ENCODE measurements at regions of chr6 and their contacts with region 1.

Region 1: DNA sequence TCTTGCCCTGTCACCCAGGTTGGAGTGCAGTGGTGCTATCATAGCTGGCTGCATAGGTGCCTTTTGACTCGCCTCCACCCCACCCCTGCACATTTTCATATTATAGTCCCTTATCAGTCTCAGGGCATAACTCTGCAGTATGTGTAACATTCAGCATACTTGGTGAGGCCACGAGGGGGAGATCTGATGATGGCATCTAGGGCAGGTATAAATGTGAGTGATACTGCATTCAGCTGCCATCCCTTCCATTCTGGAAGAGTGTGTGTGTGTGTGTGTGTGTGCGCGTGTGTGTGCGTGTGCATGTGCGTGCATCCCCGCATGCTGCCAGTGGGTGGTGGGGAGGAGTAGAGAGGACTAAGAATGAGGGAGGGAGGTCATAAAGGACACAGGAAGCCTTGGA is 81.4 kb downstream of the JARID2 start:
- DNase-seq: peak in 6 of 9 experiments; percentile 18 to 70 (median 48)
- ATAC-seq: peak; percentile 77
- H3K4me3 ChIP-seq: no peak overlapping the region
- H3K4me3 Mint-ChIP-seq: no peak overlapping the region
- H3K27ac ChIP-seq: no peak overlapping the region
- H3K27ac Mint-ChIP-seq: no peak overlapping the region
- H3K4me1 ChIP-seq: peaks cover 66% of the 10 kb centered on the region
- H3K4me1 Mint-ChIP-seq: peaks cover 85% of the 10 kb centered on the region
- H3K27me3 ChIP-seq: no peaks in the 10 kb centered on the region
- H3K27me3 Mint-ChIP-seq: no peaks in the 10 kb centered on the region
- CTCF ChIP-seq: peak; percentile 41

Region 2: GRCh38 chr6:15254070-15254841 is 73.0 kb before region 1 on chr6:
- CTCF ChIA-PET with region 1: no interaction called
- POLR2A ChIA-PET with region 1: interaction called, 3 read pairs
- intact Hi-C with region 1: loop called (anchors 2 kb)
- DNase-seq: peak in 1 of 9 experiments; percentile 39
- ATAC-seq: no peak
- H3K4me3 ChIP-seq: no peak overlapping the region
- H3K4me3 Mint-ChIP-seq: no peak overlapping the region
- H3K27ac ChIP-seq: peak overlapping the region in 1 of 2 experiments; percentile 20
- H3K27ac Mint-ChIP-seq: peak overlapping the region; percentile 71
- H3K4me1 ChIP-seq: peaks cover 72% of the 10 kb centered on the region
- H3K4me1 Mint-ChIP-seq: peaks cover 94% of the 10 kb centered on the region
- H3K27me3 ChIP-seq: no peaks in the 10 kb centered on the region
- H3K27me3 Mint-ChIP-seq: no peaks in the 10 kb centered on the region
- CTCF ChIP-seq: no peak

Region 3: DNA sequence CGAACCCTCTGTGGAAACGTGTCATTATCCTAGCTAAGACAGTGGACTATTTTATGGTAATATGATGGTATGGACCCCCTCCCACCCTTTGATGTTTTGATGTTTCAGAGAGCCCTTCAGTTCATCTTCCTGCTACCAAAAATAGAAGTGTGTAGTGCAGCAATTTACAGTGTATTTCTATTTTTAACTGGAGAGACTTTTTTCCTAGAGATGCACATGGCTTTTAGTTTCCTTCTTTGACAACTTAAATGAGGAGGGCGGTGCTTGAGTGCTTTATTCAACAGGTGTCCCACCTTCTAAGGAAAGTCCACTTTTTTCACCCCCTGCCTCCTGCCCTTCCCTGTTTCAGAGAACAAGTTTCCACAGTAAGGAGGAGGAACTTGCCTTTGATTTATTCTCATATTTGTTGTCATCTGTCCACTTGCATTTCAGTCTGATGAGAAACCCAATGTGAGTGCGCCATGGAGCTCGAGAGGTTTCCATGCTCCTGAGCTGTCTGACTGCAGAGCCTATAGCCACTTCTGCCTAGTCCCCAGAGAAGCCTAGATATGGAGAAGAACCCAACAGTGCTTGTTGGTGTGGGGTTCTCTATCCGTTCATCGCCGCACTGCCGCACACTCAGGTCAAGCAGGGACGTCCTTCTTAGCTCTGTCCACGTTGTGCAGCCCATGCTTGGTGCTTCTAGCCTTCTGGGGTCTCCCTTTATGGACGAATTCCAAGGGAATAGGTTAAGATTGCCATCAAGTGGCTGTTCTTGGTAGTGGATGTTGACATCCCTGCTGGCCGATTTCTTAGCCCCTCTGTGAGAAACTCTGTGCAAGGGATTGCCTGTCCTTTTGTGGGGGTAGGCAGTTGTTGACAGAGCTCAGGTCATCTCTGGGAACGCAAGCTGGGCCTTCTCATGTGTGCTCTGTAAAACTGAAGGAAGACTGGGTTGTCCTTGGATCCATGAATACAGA is 62.8 kb after region 1 on chr6:
- CTCF ChIA-PET with region 1: interaction called, 3 read pairs
- POLR2A ChIA-PET with region 1: no interaction called
- intact Hi-C with region 1: loop called (anchors 5 to 10 kb)
- DNase-seq: peak in 4 of 9 experiments; percentile 25 to 61 (median 38)
- ATAC-seq: peak; percentile 63
- H3K4me3 ChIP-seq: no peak overlapping the region
- H3K4me3 Mint-ChIP-seq: peak overlapping the region; percentile 3
- H3K27ac ChIP-seq: no peak overlapping the region
- H3K27ac Mint-ChIP-seq: no peak overlapping the region
- H3K4me1 ChIP-seq: peaks cover 27% of the 10 kb centered on the region
- H3K4me1 Mint-ChIP-seq: peaks cover 67% of the 10 kb centered on the region
- H3K27me3 ChIP-seq: no peaks in the 10 kb centered on the region
- H3K27me3 Mint-ChIP-seq: no peaks in the 10 kb centered on the region
- CTCF ChIP-seq: peak; percentile 65

Region 4: GRCh38 chr6:15441215-15441868 is 114.1 kb after region 1 on chr6:
- CTCF ChIA-PET with region 1: interaction called, 3 read pairs
- POLR2A ChIA-PET with region 1: no interaction called
- intact Hi-C with region 1: loop called (anchors 1 to 2 kb)
- DNase-seq: peak in 4 of 9 experiments; percentile 31 to 71 (median 46)
- ATAC-seq: peak; percentile 65
- H3K4me3 ChIP-seq: no peak overlapping the region
- H3K4me3 Mint-ChIP-seq: no peak overlapping the region
- H3K27ac ChIP-seq: no peak overlapping the region
- H3K27ac Mint-ChIP-seq: no peak overlapping the region
- H3K4me1 ChIP-seq: peaks cover 33% of the 10 kb centered on the region
- H3K4me1 Mint-ChIP-seq: peaks cover 79% of the 10 kb centered on the region
- H3K27me3 ChIP-seq: no peaks in the 10 kb centered on the region
- H3K27me3 Mint-ChIP-seq: no peaks in the 10 kb centered on the region
- CTCF ChIP-seq: peak; percentile 76

Region 5: GRCh38 chr6:15491255-15491985 is 164.1 kb after region 1 on chr6:
- CTCF ChIA-PET with region 1: no interaction called
- POLR2A ChIA-PET with region 1: no interaction called
- intact Hi-C with region 1: loop called in 1 of 2 experiments (anchors 5 kb)
- DNase-seq: peak; percentile 49 to 80 (median 68)
- ATAC-seq: peak; percentile 89
- H3K4me3 ChIP-seq: no peak overlapping the region
- H3K4me3 Mint-ChIP-seq: no peak overlapping the region
- H3K27ac ChIP-seq: no peak overlapping the region
- H3K27ac Mint-ChIP-seq: peak overlapping the region; percentile 2
- H3K4me1 ChIP-seq: peaks cover 12% of the 10 kb centered on the region
- H3K4me1 Mint-ChIP-seq: peaks cover 40% of the 10 kb centered on the region
- H3K27me3 ChIP-seq: no peaks in the 10 kb centered on the region
- H3K27me3 Mint-ChIP-seq: no peaks in the 10 kb centered on the region
- CTCF ChIP-seq: peak; percentile 92

Region 6: DNA sequence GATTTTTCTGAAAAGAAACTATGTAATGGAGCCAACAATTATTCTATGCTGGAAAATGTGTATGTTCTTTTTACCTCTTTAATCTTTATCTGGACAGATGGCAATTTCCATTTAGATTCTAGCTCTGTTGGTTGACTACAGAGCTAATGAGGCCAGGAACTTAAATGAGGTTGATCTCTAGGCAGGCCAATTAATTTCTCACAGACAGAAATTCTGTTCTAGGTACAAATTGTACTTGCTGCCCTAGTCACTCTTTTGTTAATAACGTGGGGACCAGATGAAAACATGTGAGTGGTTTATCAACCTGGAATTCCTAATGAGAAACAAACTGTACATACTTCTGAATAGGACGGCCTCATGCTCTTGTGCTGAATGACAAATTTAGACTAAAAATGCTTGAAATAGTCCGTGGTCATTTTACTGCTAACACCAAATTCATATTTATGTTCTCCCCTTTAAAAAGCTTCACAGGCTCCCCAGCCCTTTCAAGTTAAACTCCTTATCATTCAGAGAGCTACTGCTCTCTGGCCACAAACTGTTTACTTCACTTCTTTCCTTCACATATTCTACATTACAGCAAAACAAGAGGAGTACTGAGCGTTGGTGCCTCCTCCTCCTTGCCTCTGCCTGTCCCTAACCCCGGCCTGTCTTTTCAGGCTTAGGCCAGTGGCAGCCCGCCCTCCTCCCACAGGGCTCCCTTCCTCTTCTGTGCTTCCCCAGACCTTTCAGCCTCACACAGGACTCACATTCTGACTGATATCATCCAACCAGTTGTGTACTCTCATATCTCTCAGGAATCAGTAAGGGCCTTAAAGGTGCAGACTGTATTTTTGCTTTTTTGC is 294.2 kb after region 1 on chr6:
- CTCF ChIA-PET with region 1: no interaction called
- POLR2A ChIA-PET with region 1: no interaction called
- intact Hi-C with region 1: loop called in 1 of 2 experiments (anchors 5 kb)
- DNase-seq: peak in 1 of 9 experiments; percentile 12
- ATAC-seq: no peak
- H3K4me3 ChIP-seq: no peak overlapping the region
- H3K4me3 Mint-ChIP-seq: no peak overlapping the region
- H3K27ac ChIP-seq: no peak overlapping the region
- H3K27ac Mint-ChIP-seq: no peak overlapping the region
- H3K4me1 ChIP-seq: peaks cover 11% of the 10 kb centered on the region
- H3K4me1 Mint-ChIP-seq: peaks cover 47% of the 10 kb centered on the region
- H3K27me3 ChIP-seq: no peaks in the 10 kb centered on the region
- H3K27me3 Mint-ChIP-seq: no peaks in the 10 kb centered on the region
- CTCF ChIP-seq: no peak